Psoas muscle (tissue), 8 donors: ENCODE measurements at regions of chr10 and their contacts with region 1.

Region 1: GRCh38 chr10:118568327-118568848 is 27.1 kb downstream of the PRLHR start:
- DNase-seq: no peak
- ATAC-seq: peak; percentile 69 to 88 (median 72)
- H3K4me3 ChIP-seq: no peak overlapping the region
- H3K27ac ChIP-seq: no peak overlapping the region
- H3K4me1 ChIP-seq: no peaks in the 10 kb centered on the region
- H3K27me3 ChIP-seq: peaks cover 0 to 2% (median 0%) of the 10 kb centered on the region in 3 donors
- CTCF ChIP-seq: peak; percentile 74

Region 2: DNA sequence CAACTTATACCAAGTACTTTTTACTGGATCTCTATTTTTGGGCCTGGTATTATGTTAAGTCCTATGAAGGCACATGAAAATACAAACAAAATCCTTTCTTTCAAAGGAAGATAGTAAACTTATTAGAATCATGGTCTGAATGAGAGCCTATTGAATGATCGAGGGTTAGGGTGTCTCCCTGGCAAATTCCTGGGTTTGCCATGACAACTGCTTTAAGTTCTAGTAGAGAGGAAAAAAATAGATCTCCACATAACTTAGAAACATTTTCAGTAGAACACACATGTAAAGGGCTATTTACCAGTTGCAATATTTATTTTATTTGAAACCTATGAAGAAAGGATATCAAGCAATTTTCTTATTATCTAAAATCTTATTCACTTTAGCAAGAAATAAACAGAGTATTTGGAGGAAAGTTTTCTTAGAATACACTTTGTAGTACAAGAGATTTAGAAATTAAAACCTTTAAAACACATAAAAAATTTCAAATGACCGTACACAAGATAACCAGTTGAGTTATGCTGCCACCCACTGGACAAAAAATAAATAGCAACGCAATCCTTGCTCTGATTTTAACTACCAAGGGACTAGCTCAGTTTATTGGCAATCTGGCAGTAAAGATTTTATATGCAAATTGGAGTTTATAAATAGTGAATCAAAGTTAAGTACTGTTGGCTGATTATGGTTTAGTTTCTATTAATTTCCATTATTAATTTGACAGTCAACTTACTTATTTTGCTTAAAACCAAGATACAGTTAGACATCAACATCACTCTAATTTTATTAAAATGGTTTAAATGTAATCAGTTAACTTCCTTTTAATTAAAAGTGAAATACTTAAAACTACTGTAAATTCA is 152.5 kb after region 1 on chr10:
- intact Hi-C with region 1: loop called (anchors 2 to 5 kb)
- DNase-seq: no peak
- ATAC-seq: peak in 2 of 4 donors; percentile 42 to 60
- H3K4me3 ChIP-seq: no peak overlapping the region
- H3K27ac ChIP-seq: no peak overlapping the region
- H3K4me1 ChIP-seq: peaks cover 50% of the 10 kb centered on the region
- H3K27me3 ChIP-seq: no peaks in the 10 kb centered on the region
- CTCF ChIP-seq: peak; percentile 86

Region 3: DNA sequence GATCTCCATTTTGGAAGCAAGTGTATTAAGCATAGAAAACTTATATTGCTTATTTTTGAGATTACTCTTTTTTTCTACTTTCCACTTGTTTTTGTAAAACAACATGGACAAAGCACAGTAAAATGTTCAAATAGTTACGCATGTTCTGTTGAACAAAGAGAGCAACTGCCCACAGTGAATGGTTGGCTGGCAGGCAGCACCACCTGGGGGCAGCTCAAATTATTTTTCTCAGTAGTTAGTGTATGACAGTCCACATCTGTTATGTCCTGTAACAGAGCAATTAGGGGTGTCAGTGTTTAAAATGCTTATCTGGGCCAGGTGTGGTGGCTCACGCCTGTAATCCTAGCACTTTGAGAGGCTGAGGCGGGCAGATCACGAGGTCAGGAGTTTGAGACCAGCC is 232.5 kb after region 1 on chr10:
- intact Hi-C with region 1: loop called (anchors 2 to 5 kb)
- DNase-seq: no peak
- ATAC-seq: peak; percentile 57 to 76 (median 62)
- H3K4me3 ChIP-seq: no peak overlapping the region
- H3K27ac ChIP-seq: no peak overlapping the region
- H3K4me1 ChIP-seq: peaks cover 10% of the 10 kb centered on the region
- H3K27me3 ChIP-seq: no peaks in the 10 kb centered on the region
- CTCF ChIP-seq: peak; percentile 50

Region 4: GRCh38 chr10:118844731-118845521 is 276.5 kb after region 1 on chr10:
- intact Hi-C with region 1: loop called in 1 of 2 experiments (anchors 5 kb)
- DNase-seq: no peak
- ATAC-seq: peak in 2 of 4 donors; percentile 52 to 66
- H3K4me3 ChIP-seq: no peak overlapping the region
- H3K27ac ChIP-seq: no peak overlapping the region
- H3K4me1 ChIP-seq: peaks cover 7% of the 10 kb centered on the region
- H3K27me3 ChIP-seq: no peaks in the 10 kb centered on the region
- CTCF ChIP-seq: no peak

Region 5: DNA sequence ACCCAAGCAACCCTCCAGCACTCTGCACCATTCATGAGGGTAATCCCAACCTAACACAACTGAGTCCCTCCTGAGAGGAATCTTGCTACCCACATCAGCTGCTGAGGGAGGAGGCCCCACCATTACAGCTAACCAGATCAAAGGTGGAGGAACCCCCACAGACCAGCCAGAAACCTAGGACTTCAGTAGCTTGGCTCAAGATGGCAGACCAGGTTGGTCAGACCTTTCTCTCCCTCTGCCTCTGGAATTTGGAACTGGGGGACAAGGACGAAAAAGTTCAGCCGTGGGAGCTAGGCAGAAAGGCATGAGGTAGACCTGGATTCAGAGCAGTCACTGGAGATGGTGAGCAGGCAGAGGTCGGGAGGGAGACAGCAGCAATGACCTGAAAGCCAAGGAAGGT is 287.7 kb after region 1 on chr10:
- intact Hi-C with region 1: no loop called
- DNase-seq: no peak
- ATAC-seq: no peak
- H3K4me3 ChIP-seq: no peak overlapping the region
- H3K27ac ChIP-seq: no peak overlapping the region
- H3K4me1 ChIP-seq: no peaks in the 10 kb centered on the region
- H3K27me3 ChIP-seq: no peaks in the 10 kb centered on the region
- CTCF ChIP-seq: no peak